ENCODE measurements at regions of chr1 and their contacts with region 1.

Region 1: DNA sequence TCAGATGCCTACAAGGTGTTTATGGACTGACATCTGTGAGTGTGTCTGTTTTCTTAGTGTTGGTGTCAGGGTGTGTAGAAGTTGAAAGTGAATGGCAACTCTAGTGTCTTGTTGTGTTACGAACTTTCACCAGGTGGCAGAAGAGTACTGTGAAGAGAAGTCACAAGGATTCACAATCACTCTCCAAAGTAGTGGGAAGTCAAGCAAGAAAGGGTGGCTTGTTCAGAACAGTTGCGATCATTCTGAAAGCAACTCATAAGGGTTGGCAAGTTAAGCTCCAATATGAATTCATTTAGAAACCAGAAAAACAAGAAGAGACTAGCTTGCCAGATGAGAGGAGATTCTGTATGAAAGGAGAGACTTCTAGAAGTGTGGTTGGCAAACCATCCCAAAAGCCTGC is 86.1 kb downstream of the FASLG start:
- DNase-seq: peak; percentile 46 to 62 (median 59)
- H3K4me3 ChIP-seq: no peak overlapping the region
- H3K4me3 Mint-ChIP-seq: peak overlapping the region in 5 of 8 donors; percentile 46 to 81 (median 64)
- H3K27ac ChIP-seq: no peak overlapping the region
- H3K27ac Mint-ChIP-seq: peak overlapping the region in 6 of 7 donors; percentile 1 to 57 (median 22)
- H3K4me1 ChIP-seq: peaks cover 32% of the 10 kb centered on the region
- H3K4me1 Mint-ChIP-seq: peaks cover 29 to 38% (median 33%) of the 10 kb centered on the region in 4 donors
- H3K27me3 ChIP-seq: no peaks in the 10 kb centered on the region
- H3K27me3 Mint-ChIP-seq: peaks cover 0 to 3% of the 10 kb centered on the region in 2 donors

Region 2: DNA sequence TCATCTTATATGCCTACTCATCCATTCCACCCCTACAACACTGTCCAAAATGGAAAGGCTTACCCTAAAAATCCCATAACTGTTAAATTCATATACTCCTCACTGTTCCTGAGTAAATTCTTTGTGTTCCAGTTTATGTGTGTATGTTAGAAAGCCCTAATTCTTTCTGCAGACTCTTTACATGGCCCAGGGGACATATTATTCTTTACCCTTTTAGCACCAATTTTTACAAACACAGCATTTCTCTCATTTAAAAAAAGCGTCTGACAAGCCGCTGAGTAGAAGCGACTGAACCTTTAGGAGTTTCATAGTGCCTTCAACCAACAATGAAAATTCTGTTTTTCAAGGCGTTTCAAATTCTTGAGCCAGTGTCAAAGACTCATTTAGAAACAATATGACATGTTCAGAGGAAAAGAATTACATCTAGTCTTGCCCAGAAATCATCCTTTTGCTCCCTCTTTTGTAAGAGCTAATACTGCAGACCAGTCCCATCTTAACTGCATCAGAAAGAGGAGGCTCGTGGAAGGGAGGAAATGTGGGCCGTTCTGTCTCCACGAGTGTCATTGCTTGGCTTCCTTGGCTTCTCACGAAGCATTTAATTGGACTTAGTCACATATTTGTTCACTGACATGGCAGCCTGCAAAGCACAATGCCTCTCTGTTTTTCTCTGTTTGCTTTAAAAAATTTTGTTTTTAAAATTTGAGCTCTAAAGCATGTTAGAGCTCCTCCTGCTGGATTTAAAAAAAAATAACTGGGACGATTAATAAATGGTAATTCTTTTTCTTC is 345.9 kb before region 1 on chr1:
- CTCF ChIA-PET with region 1: no interaction called
- POLR2A ChIA-PET with region 1: no interaction called
- intact Hi-C with region 1: no loop called
- DNase-seq: peak in 4 of 5 donors; percentile 43 to 55 (median 49)
- H3K4me3 ChIP-seq: peak overlapping the region in 1 of 2 donors; percentile 20
- H3K4me3 Mint-ChIP-seq: peak overlapping the region; percentile 21 to 80 (median 70)
- H3K27ac ChIP-seq: no peak overlapping the region
- H3K27ac Mint-ChIP-seq: peak overlapping the region; percentile 64 to 82 (median 77)
- H3K4me1 ChIP-seq: peaks cover 44% of the 10 kb centered on the region
- H3K4me1 Mint-ChIP-seq: peaks cover 32 to 68% (median 53%) of the 10 kb centered on the region in 4 donors
- H3K27me3 ChIP-seq: no peaks in the 10 kb centered on the region
- H3K27me3 Mint-ChIP-seq: no peaks in the 10 kb centered on the region

Region 3: GRCh38 chr1:172818841-172819527 is 74.0 kb after region 1 on chr1:
- CTCF ChIA-PET with region 1: interaction called, 11 read pairs
- POLR2A ChIA-PET with region 1: no interaction called
- intact Hi-C with region 1: no loop called
- DNase-seq: peak in 4 of 5 donors; percentile 8 to 17 (median 12)
- H3K4me3 ChIP-seq: no peak overlapping the region
- H3K4me3 Mint-ChIP-seq: peak overlapping the region; percentile 8 to 81 (median 76)
- H3K27ac ChIP-seq: no peak overlapping the region
- H3K27ac Mint-ChIP-seq: peak overlapping the region; percentile 3 to 84 (median 67)
- H3K4me1 ChIP-seq: peaks cover 23% of the 10 kb centered on the region
- H3K4me1 Mint-ChIP-seq: peaks cover 17 to 24% (median 19%) of the 10 kb centered on the region in 4 donors
- H3K27me3 ChIP-seq: no peaks in the 10 kb centered on the region
- H3K27me3 Mint-ChIP-seq: no peaks in the 10 kb centered on the region

Region 4: GRCh38 chr1:173409613-173410012 is 664.6 kb after region 1 on chr1:
- CTCF ChIA-PET with region 1: interaction called, 9 read pairs
- POLR2A ChIA-PET with region 1: no interaction called
- intact Hi-C with region 1: loop called (anchors 1 kb)
- DNase-seq: peak in 2 of 5 donors; percentile 14 to 15
- H3K4me3 ChIP-seq: no peak overlapping the region
- H3K4me3 Mint-ChIP-seq: peak overlapping the region in 2 of 8 donors; percentile 26 to 61
- H3K27ac ChIP-seq: no peak overlapping the region
- H3K27ac Mint-ChIP-seq: peak overlapping the region in 5 of 7 donors; percentile 19 to 80 (median 32)
- H3K4me1 ChIP-seq: peaks cover 29% of the 10 kb centered on the region
- H3K4me1 Mint-ChIP-seq: peaks cover 20 to 33% (median 26%) of the 10 kb centered on the region in 4 donors
- H3K27me3 ChIP-seq: no peaks in the 10 kb centered on the region
- H3K27me3 Mint-ChIP-seq: no peaks in the 10 kb centered on the region

Region 5: GRCh38 chr1:173476664-173477285 is 731.8 kb after region 1 on chr1:
- CTCF ChIA-PET with region 1: no interaction called
- POLR2A ChIA-PET with region 1: no interaction called
- intact Hi-C with region 1: loop called (anchors 2 kb)
- DNase-seq: peak; percentile 77 to 90 (median 84)
- H3K4me3 ChIP-seq: peak overlapping the region; percentile 93
- H3K4me3 Mint-ChIP-seq: peak overlapping the region; percentile 89 to 94 (median 91)
- H3K27ac ChIP-seq: peak overlapping the region; percentile 89
- H3K27ac Mint-ChIP-seq: peak overlapping the region; percentile 89 to 95 (median 91)
- H3K4me1 ChIP-seq: peaks cover 61% of the 10 kb centered on the region
- H3K4me1 Mint-ChIP-seq: peaks cover 38 to 68% (median 55%) of the 10 kb centered on the region in 4 donors
- H3K27me3 ChIP-seq: no peaks in the 10 kb centered on the region
- H3K27me3 Mint-ChIP-seq: no peaks in the 10 kb centered on the region

Region 6: GRCh38 chr1:174074757-174075156 is 1329.7 kb after region 1 on chr1:
- CTCF ChIA-PET with region 1: no interaction called
- POLR2A ChIA-PET with region 1: no interaction called
- intact Hi-C with region 1: loop called (anchors 10 kb)
- DNase-seq: peak in 2 of 5 donors; percentile 6 to 14
- H3K4me3 ChIP-seq: no peak overlapping the region
- H3K4me3 Mint-ChIP-seq: no peak overlapping the region
- H3K27ac ChIP-seq: no peak overlapping the region
- H3K27ac Mint-ChIP-seq: no peak overlapping the region
- H3K4me1 ChIP-seq: no peaks in the 10 kb centered on the region
- H3K4me1 Mint-ChIP-seq: no peaks in the 10 kb centered on the region
- H3K27me3 ChIP-seq: no peaks in the 10 kb centered on the region
- H3K27me3 Mint-ChIP-seq: peaks cover 0 to 4% of the 10 kb centered on the region in 2 donors

Measured in CD4-positive, alpha-beta memory T cell (primary cell).